ENCODE measurements at regions of chrX and their contacts with region 1.

Region 1: GRCh38 chrX:153438531-153438930 is 7.3 kb downstream of the TREX2 start:
- DNase-seq: no peak
- H3K4me3 ChIP-seq: no peak overlapping the region
- H3K27me3 ChIP-seq: no peaks in the 10 kb centered on the region
- CTCF ChIP-seq: peak; percentile 46

Region 2: GRCh38 chrX:153032397-153033118 is 406.0 kb before region 1 on chrX:
- CTCF ChIA-PET with region 1: interaction called, 15 read pairs
- POLR2A ChIA-PET with region 1: no interaction called
- DNase-seq: no peak
- H3K4me3 ChIP-seq: peak overlapping the region; percentile 28
- H3K27me3 ChIP-seq: no peaks in the 10 kb centered on the region
- CTCF ChIP-seq: peak; percentile 76

Region 3: DNA sequence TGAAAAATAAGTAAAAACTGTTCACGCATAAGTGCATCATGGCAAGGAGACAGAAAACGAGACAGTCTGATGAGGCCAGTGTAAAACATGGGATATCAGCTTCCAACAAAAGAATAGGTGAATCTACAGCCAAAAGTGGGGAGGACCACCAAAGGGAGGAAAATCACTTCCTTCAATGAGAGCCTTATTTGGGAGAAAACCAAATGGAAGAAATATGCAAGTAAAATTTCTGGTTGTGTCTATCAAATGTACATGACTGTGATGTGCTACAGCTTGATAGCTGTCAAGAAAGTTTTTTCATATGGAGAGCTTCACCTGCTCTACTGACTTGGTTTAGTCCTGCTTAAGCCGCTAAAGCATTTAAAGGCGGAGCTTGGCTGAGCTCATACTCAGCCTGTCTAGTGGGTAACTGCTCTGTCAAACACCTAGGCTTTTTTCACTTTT is 193.2 kb before region 1 on chrX:
- CTCF ChIA-PET with region 1: no interaction called
- POLR2A ChIA-PET with region 1: no interaction called
- DNase-seq: no peak
- H3K4me3 ChIP-seq: no peak overlapping the region
- H3K27me3 ChIP-seq: no peaks in the 10 kb centered on the region
- CTCF ChIP-seq: no peak

Region 4: DNA sequence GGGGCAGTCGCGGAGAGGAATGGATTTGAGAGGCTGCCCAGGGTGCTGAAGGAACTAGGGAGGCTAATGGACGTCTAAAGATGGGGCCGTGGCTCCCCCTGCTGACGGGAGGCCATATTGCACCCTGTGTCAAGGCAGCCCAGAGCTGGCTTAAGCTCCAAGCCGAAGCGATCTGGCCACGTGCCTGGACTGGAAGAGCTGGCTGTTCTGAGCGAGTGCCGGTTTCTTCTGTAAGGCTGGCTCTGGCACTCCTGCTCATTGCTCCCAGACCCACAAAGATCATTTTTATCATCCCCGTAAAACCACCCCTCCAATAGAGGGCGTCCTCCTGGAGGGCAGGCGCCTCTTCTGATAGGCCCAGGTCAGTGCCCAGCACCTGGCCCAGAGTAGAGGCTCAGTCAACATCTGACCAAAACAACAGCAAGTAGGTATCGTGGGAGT is 229.4 kb after region 1 on chrX:
- CTCF ChIA-PET with region 1: no interaction called
- POLR2A ChIA-PET with region 1: no interaction called
- DNase-seq: peak; percentile 5
- H3K4me3 ChIP-seq: no peak overlapping the region; the same call in 1 of the 2 replicates
- H3K27me3 ChIP-seq: no peaks in the 10 kb centered on the region; the same call in none of the 2 replicates
- CTCF ChIP-seq: peak; percentile 71